ENCODE measurements at regions of chr1 and their contacts with region 1.

Region 1: GRCh38 chr1:201895913-201896807 is 7.5 kb downstream of the SHISA4 start:
- DNase-seq: peak; percentile 94
- H3K4me3 Mint-ChIP-seq: peak overlapping the region; percentile 50
- H3K27ac Mint-ChIP-seq: peak overlapping the region; percentile 33
- H3K4me1 Mint-ChIP-seq: peaks cover 5% of the 10 kb centered on the region
- H3K27me3 Mint-ChIP-seq: peaks cover 15% of the 10 kb centered on the region

Region 2: DNA sequence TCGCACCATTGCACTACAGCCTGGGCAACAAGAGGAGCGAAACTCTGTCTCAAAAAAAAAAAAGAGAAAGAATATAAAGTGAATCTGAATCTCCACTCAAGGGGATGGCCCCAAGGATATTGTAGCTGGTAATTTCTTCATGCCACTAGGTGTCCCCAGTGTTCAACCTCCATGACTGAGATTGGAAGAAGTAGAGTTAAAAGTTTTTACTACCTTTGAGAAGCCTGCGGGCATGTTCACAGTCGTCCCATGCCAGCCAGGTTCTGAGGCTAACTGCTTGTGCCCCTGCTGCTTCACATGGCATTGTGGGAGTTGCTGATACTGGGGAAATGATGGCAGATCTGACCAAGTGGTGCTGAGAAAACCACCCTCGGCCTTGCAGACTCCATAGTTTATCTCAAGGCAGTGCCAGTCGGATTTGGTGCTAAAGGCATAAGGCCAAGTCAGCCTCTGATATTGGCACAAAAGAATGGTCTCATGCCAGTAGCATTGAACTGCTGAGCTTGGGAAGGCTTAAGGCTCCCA is 18.2 kb before region 1 on chr1:
- CTCF ChIA-PET with region 1: interaction called, 46 read pairs
- intact Hi-C with region 1: no loop called
- DNase-seq: peak; percentile 57
- H3K4me3 Mint-ChIP-seq: no peak overlapping the region
- H3K27ac Mint-ChIP-seq: peak overlapping the region; percentile 18
- H3K4me1 Mint-ChIP-seq: no peaks in the 10 kb centered on the region
- H3K27me3 Mint-ChIP-seq: no peaks in the 10 kb centered on the region

Region 3: DNA sequence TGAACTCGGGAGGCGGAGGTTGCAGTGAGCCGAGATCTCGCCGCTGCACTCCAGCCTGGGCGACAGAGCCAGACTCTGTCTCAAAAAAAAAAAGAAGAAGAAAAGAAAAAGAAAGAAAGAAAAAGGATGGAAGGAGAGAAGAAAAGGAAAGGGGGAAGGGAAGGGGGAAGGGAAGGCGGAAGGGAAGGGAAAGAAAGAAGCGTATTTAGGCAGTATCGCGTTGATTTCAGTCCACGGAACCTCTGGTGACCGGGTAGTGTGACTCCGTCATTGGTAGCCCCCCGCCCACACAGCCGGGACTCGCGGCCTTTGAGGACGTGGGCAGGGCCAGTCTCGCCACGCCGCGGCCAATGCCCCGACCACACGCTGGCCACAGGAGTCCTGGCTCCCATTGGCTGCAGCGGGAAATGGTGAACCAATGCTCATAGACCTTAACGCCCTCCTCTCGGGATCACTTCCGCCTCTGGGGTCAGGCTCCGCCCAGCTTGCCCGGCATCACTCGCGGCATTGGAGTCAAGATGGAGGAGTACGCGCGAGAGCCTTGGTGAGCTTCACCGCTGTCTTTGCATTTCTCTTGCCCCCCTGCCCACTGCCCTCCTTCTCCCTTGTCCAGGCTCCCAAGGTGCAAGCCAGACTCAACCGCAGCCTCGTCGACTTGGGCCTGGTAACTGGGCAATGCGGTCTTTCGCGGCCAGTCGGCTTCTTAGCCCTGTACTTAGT is 59.0 kb after region 1 on chr1 and contains the start of gene TIMM17A:
- CTCF ChIA-PET with region 1: interaction called, 33 read pairs
- intact Hi-C with region 1: loop called (anchors 1 kb)
- DNase-seq: peak; percentile 98
- H3K4me3 Mint-ChIP-seq: peak within 1 kb of the TSS; percentile 96
- H3K27ac Mint-ChIP-seq: peak within 1 kb of the TSS; percentile 92
- H3K4me1 Mint-ChIP-seq: peaks cover 20% of the 10 kb centered on the region
- H3K27me3 Mint-ChIP-seq: no peaks in the 10 kb centered on the region
- total RNA-seq, gene TIMM17A: 52.6 to 54.4 TPM

Region 4: GRCh38 chr1:201982623-201983379 is 86.6 kb after region 1 on chr1 and contains the start of gene RNPEP:
- CTCF ChIA-PET with region 1: interaction called, 28 read pairs
- intact Hi-C with region 1: loop called (anchors 1 kb)
- DNase-seq: peak; percentile 57
- H3K4me3 Mint-ChIP-seq: peak within 1 kb of the TSS; percentile 92
- H3K27ac Mint-ChIP-seq: peak within 1 kb of the TSS; percentile 69
- H3K4me1 Mint-ChIP-seq: peaks cover 17% of the 10 kb centered on the region
- H3K27me3 Mint-ChIP-seq: no peaks in the 10 kb centered on the region
- total RNA-seq, gene RNPEP: 43.4 to 44.4 TPM

Region 5: DNA sequence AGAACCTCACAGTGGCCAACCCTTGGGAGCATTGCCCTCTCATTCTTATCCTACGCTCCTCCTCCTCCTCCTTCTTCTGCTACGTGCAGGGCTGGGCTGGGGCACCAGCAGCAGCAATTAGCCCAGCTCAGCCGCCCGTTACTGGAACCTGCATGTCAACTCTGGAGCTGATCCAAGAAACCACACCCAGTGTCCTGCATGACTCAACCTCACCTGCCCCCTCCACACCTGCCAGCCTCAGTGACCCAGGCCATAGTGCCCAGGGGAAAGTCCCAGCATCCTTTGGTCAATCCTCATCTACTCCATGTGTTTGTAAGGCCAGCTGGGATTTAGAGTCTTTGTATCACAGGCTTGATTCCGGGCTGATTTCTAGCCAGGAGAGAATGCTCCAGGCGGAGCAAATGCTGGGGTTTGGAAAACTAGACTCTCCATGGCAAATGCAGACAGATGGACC is 126.9 kb after region 1 on chr1:
- CTCF ChIA-PET with region 1: no interaction called
- intact Hi-C with region 1: no loop called
- DNase-seq: no peak
- H3K4me3 Mint-ChIP-seq: no peak overlapping the region
- H3K27ac Mint-ChIP-seq: no peak overlapping the region
- H3K4me1 Mint-ChIP-seq: no peaks in the 10 kb centered on the region
- H3K27me3 Mint-ChIP-seq: peaks cover 3% of the 10 kb centered on the region

Region 6: GRCh38 chr1:202122639-202123335 is 226.6 kb after region 1 on chr1 and contains the start of gene GPR37L1:
- CTCF ChIA-PET with region 1: interaction called, 5 read pairs
- intact Hi-C with region 1: loop called (anchors 1 kb)
- DNase-seq: no peak
- H3K4me3 Mint-ChIP-seq: no peak within 1 kb of the TSS
- H3K27ac Mint-ChIP-seq: no peak within 1 kb of the TSS
- H3K4me1 Mint-ChIP-seq: no peaks in the 10 kb centered on the region
- H3K27me3 Mint-ChIP-seq: peaks cover 7% of the 10 kb centered on the region
- total RNA-seq, gene GPR37L1: not detected